Ascending aorta (tissue), 2 donors: ENCODE measurements at regions of chr1 and their contacts with region 1.

Region 1: GRCh38 chr1:224329842-224330753 is at the start of gene NVL:
- DNase-seq: peak; percentile 12 to 86
- H3K4me3 ChIP-seq: peak within 1 kb of the TSS; percentile 79 to 83
- H3K27ac ChIP-seq: peak within 1 kb of the TSS; percentile 83 to 91
- H3K4me1 ChIP-seq: peaks cover 0 to 18% of the 10 kb centered on the region in 2 donors
- H3K27me3 ChIP-seq: no peaks in the 10 kb centered on the region
- CTCF ChIP-seq: no peak
- total RNA-seq, gene NVL: 34.6 TPM

Region 2: GRCh38 chr1:223695941-223696340 is 634.2 kb before region 1 on chr1:
- intact Hi-C with region 1: loop called (anchors 5 kb)
- DNase-seq: peak in 1 of 2 donors; percentile 3
- H3K4me3 ChIP-seq: no peak overlapping the region
- H3K27ac ChIP-seq: no peak overlapping the region
- H3K4me1 ChIP-seq: peaks cover 7 to 15% of the 10 kb centered on the region in 2 donors
- H3K27me3 ChIP-seq: no peaks in the 10 kb centered on the region
- CTCF ChIP-seq: no peak

Region 3: DNA sequence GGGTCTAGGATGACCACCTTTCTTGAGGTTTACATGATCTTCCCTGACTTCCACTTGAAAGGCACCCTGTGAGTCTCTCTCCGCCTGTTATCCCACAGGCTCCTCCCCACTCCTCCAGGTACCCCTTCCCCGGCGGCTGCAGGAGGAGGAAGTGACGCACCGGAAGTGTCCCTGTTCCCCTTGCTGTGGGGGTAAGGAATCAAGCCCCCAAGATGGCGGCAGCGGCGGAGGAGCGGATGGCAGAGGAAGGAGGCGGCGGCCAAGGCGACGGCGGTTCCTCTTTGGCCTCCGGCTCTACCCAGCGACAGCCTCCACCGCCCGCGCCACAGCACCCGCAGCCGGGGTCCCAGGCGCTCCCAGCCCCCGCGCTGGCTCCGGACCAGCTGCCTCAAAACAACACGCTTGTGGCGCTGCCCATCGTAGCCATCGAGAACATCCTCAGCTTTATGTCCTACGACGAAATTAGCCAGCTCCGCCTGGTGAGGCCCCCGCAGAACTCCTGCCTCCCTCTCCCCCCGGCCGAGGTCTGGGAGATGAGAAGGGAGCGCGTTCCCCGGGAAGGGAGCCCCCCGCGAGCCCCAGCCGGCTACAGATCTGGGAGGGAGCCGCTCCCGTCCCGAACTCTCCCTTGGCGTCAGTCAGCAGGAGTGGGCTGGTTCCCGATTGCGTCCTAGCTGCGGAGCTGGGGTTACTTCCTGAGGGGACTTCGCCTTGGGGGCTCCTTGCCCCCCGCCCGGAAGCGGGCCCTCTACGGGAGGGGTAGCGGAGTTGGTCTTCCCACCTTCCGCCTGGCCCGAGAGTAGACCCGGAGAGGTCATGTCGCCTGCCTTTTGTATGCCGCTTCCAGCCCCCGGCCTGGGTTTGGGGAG is 215.9 kb before region 1 on chr1 and contains the start of gene FBXO28:
- intact Hi-C with region 1: loop called (anchors 2 kb)
- DNase-seq: peak; percentile 87 to 97
- H3K4me3 ChIP-seq: peak within 1 kb of the TSS; percentile 85
- H3K27ac ChIP-seq: peak within 1 kb of the TSS; percentile 92 to 96
- H3K4me1 ChIP-seq: peaks cover 5 to 14% of the 10 kb centered on the region in 2 donors
- H3K27me3 ChIP-seq: no peaks in the 10 kb centered on the region
- CTCF ChIP-seq: no peak
- total RNA-seq, gene FBXO28: 4.8 TPM

Region 4: GRCh38 chr1:224356685-224357625 is 26.9 kb after region 1 on chr1 and contains the start of gene CNIH4:
- intact Hi-C with region 1: loop called (anchors 1 kb)
- DNase-seq: peak; percentile 82 to 96
- H3K4me3 ChIP-seq: peak within 1 kb of the TSS; percentile 59 to 97
- H3K27ac ChIP-seq: peak within 1 kb of the TSS; percentile 90 to 96
- H3K4me1 ChIP-seq: peaks cover 0 to 21% of the 10 kb centered on the region in 2 donors
- H3K27me3 ChIP-seq: no peaks in the 10 kb centered on the region
- CTCF ChIP-seq: no peak
- total RNA-seq, gene CNIH4: 26.9 TPM